Left ventricle myocardium inferior (tissue), 1 donor: ENCODE measurements at regions of chr3 and their contacts with region 1.

Region 1: DNA sequence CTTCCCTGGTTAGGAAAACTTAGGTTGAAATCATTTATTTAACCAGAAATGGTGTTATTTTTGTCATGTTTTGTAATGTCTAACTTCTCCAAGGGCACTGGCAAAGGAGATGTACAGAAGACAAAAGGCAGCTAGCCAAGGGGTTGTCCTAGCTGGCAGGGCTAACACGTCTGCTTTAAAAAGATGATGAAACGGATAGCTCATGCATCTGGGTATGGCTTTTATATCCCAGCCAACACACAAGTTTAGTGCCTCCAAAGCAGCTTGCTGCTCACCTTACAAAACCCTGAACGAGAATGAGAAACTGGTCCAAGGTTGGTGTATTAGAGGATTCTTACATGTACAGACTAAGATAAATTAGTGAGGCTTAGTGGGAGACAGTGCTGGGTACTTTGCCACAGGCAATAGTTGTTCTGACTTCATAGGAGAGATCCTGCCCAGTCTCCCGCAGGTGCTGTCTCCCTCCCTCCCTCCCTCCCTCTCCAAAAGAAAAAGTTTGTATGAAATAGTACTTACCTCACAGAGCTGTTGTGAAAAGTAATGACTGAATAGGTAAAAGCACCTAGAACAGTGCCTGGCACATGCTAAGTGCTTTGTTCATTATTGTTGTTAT is 47.8 kb downstream of the KCNMB2 start:
- DNase-seq: peak; percentile 16
- H3K4me3 ChIP-seq: no peak overlapping the region
- H3K27ac ChIP-seq: no peak overlapping the region
- H3K4me1 ChIP-seq: peaks cover 22% of the 10 kb centered on the region
- H3K27me3 ChIP-seq: no peaks in the 10 kb centered on the region
- CTCF ChIP-seq: no peak

Region 2: DNA sequence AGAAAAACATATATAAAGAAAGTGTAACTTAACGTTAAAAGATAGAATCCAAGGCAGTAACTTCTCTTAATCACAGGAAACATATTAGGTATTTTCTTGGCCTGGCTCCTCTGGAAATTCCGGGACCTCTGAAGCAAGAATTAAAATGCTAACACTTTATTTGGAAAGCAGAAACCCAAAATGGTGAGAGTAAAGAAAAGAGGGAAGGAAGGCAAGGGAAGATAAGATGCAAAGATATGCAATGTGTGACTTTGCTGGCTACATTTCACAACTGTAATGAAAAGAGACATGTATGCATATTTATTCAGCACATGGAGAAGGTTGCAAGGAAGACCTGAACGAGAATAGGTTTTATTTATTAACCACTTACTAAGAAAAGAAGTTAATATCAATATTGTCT is 1759.3 kb before region 1 on chr3:
- intact Hi-C with region 1: loop called (anchors 10 kb)
- DNase-seq: no peak
- H3K4me3 ChIP-seq: no peak overlapping the region
- H3K27ac ChIP-seq: no peak overlapping the region
- H3K4me1 ChIP-seq: no peaks in the 10 kb centered on the region
- H3K27me3 ChIP-seq: peaks cover 11% of the 10 kb centered on the region
- CTCF ChIP-seq: no peak

Region 3: GRCh38 chr3:177378168-177378567 is 1205.9 kb before region 1 on chr3:
- intact Hi-C with region 1: no loop called
- DNase-seq: no peak
- H3K4me3 ChIP-seq: no peak overlapping the region
- H3K27ac ChIP-seq: no peak overlapping the region
- H3K4me1 ChIP-seq: no peaks in the 10 kb centered on the region
- H3K27me3 ChIP-seq: no peaks in the 10 kb centered on the region
- CTCF ChIP-seq: no peak